A549 (cell line): ENCODE measurements at regions of chr12 and their contacts with region 1.

Region 1: DNA sequence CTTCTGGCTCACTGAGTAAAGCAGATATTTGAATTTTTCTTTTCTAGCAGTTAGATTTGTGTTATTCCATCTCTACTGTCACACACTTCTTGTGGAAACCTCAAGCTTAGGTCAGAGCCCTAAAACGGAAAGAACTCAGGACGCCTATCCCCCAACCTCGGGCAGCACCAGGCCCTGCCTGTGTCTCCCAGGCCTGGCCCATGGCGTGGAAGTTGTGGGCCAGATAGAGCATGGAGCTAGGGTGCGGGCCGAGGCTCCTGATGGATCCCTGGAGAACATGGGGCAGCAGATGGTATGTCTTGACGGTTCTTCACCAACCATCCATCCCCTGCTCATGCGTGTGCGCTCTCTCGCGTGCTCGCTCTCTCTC is 20.6 kb downstream of the P2RX4 start:
- DNase-seq: no peak
- ATAC-seq: peak in 1 of 2 experiments; percentile 39; a peak in 3 of 6 replicates
- H3K4me3 ChIP-seq: no peak overlapping the region
- H3K27ac ChIP-seq: no peak overlapping the region
- H3K4me1 ChIP-seq: 0 out of 3 replicates have a peak, but pooled peaks cover 3% of the 10 kb centered on the region
- CTCF ChIP-seq: no peak
- EP300 ChIP-seq: no peak
- POLR2A ChIP-seq: no peak
- RAD21 ChIP-seq: no peak

Region 2: GRCh38 chr12:121214855-121215745 is 15.4 kb before region 1 on chr12:
- CTCF ChIA-PET with region 1: interaction called, 29 read pairs
- POLR2A ChIA-PET with region 1: no interaction called
- DNase-seq: peak; percentile 63 to 91
- ATAC-seq: peak; percentile 70 to 79
- H3K4me3 ChIP-seq: no peak overlapping the region
- H3K27ac ChIP-seq: peak overlapping the region; percentile 36 to 64; a peak in 5 of 6 replicates
- H3K4me1 ChIP-seq: peaks cover 38% of the 10 kb centered on the region
- CTCF ChIP-seq: no peak
- EP300 ChIP-seq: no peak
- POLR2A ChIP-seq: no peak
- RAD21 ChIP-seq: no peak

Region 3: GRCh38 chr12:121245031-121245430 is 14.5 kb after region 1 on chr12:
- CTCF ChIA-PET with region 1: interaction called, 10 read pairs
- POLR2A ChIA-PET with region 1: no interaction called
- DNase-seq: no peak
- ATAC-seq: no peak; a peak in 2 of 6 replicates
- H3K4me3 ChIP-seq: no peak overlapping the region
- H3K27ac ChIP-seq: no peak overlapping the region
- H3K4me1 ChIP-seq: no peaks in the 10 kb centered on the region
- CTCF ChIP-seq: no peak
- EP300 ChIP-seq: no peak
- POLR2A ChIP-seq: no peak
- RAD21 ChIP-seq: no peak